Aorta (tissue), 5 donors: ENCODE measurements at regions of chr5 and their contacts with region 1.

Region 1: GRCh38 chr5:112551419-112552032 is 132.4 kb upstream of the EPB41L4A start:
- DNase-seq: no peak
- ATAC-seq: no peak
- H3K4me3 ChIP-seq: no peak overlapping the region
- H3K27ac ChIP-seq: no peak overlapping the region
- H3K4me1 ChIP-seq: peaks cover 0 to 4% of the 10 kb centered on the region in 2 donors
- H3K27me3 ChIP-seq: no peaks in the 10 kb centered on the region

Region 2: GRCh38 chr5:112492291-112492690 is 59.2 kb before region 1 on chr5:
- intact Hi-C with region 1: no loop called
- DNase-seq: peak in 1 of 2 donors; percentile 71
- ATAC-seq: no peak
- H3K4me3 ChIP-seq: no peak overlapping the region
- H3K27ac ChIP-seq: no peak overlapping the region
- H3K4me1 ChIP-seq: no peaks in the 10 kb centered on the region
- H3K27me3 ChIP-seq: no peaks in the 10 kb centered on the region

Region 3: GRCh38 chr5:112757468-112758208 is 206.1 kb after region 1 on chr5:
- intact Hi-C with region 1: loop called (anchors 1 kb)
- DNase-seq: no peak
- ATAC-seq: no peak
- H3K4me3 ChIP-seq: peak overlapping the region in 1 of 2 donors; percentile 34
- H3K27ac ChIP-seq: peak overlapping the region in 1 of 2 donors; percentile 28
- H3K4me1 ChIP-seq: peaks cover 2% of the 10 kb centered on the region in 2 donors
- H3K27me3 ChIP-seq: no peaks in the 10 kb centered on the region

Region 4: DNA sequence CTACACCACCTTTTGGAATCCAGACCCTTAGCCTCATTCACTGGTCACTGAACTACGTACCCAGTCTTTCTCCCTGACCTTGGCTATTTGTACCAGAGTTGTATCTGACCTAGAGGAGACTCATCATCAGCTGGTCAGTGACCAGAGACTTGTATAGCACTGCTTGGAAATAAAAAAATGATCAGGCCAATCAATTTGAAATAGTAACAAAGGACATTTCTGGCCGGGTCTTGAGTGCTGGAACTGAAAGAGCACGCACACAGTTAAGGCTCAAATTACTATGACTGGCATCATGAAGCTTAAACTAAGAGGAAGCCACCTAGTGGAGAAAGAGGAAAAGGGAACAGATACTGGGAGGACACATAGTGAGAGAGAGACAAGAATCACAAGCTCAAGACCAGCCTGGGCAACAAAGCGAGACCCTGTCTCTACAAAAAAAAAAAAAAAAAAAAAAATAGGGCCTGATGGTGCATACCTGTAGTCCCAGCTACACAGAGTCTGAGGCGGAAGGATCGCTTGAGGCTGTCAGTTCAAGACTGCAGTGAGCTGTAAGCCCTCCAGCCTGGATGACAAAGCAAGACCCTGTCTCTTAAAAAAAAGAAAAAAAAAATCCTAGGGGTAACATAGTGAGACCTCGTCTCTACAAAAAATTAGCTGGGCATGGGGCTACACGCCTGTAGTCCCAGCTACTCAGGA is 296.7 kb after region 1 on chr5:
- intact Hi-C with region 1: loop called in 1 of 2 experiments (anchors 5 kb)
- DNase-seq: no peak
- ATAC-seq: peak; percentile 85
- H3K4me3 ChIP-seq: no peak overlapping the region
- H3K27ac ChIP-seq: no peak overlapping the region
- H3K4me1 ChIP-seq: no peaks in the 10 kb centered on the region
- H3K27me3 ChIP-seq: no peaks in the 10 kb centered on the region